Sigmoid colon (tissue), 7 donors: ENCODE measurements at regions of chr19 and their contacts with region 1.

Region 1: DNA sequence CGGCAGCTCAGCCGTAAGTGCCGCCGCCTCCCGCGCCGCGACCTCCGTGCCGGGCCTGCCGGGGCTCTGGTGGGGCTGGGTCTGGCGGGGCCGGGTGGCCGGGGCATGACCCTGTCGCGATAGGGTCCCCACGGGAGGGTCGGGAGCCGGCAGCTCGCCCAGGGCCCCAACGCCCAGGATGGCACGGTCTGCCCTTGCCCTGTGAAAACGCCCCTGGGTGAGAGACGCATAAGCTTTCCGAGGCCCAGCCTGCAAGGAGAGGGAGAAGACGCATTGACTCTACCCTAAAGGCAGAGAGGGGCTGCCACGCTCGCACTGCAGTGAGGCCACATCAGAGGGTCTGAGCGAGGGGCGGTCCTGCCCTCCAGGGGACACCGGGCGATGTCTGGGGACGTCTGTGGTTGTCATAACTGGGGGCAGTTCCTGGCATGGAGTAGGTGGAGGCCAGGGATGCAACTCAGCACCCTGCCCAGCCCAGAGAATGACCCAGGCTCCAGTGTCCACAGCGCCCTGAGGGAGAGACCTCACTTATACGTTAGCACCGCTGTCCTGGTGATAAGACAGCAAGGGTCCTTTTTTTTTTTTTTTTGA is 539 bp downstream of the ZNF554 start:
- DNase-seq: no peak
- H3K4me3 ChIP-seq: peak overlapping the region; percentile 74 to 86 (median 78)
- H3K27ac ChIP-seq: peak overlapping the region; percentile 48 to 77 (median 63)
- H3K4me1 ChIP-seq: peaks cover 0 to 18% (median 10%) of the 10 kb centered on the region in 4 donors
- H3K27me3 ChIP-seq: no peaks in the 10 kb centered on the region
- CTCF ChIP-seq: no peak
- EP300 ChIP-seq: no peak
- POLR2A ChIP-seq: no peak

Region 2: GRCh38 chr19:2867025-2867991 is 47.1 kb after region 1 on chr19 and contains the start of gene ZNF556:
- intact Hi-C with region 1: loop called (anchors 2 kb)
- DNase-seq: no peak
- H3K4me3 ChIP-seq: no peak within 1 kb of the TSS
- H3K27ac ChIP-seq: no peak within 1 kb of the TSS
- H3K4me1 ChIP-seq: no peaks in the 10 kb centered on the region
- H3K27me3 ChIP-seq: no peaks in the 10 kb centered on the region
- CTCF ChIP-seq: no peak
- EP300 ChIP-seq: no peak
- POLR2A ChIP-seq: no peak
- total RNA-seq, gene ZNF556: not detected

Region 3: GRCh38 chr19:3116255-3116602 is 296.0 kb after region 1 on chr19:
- intact Hi-C with region 1: no loop called
- DNase-seq: no peak
- H3K4me3 ChIP-seq: no peak overlapping the region
- H3K27ac ChIP-seq: peak overlapping the region in 3 of 4 donors; percentile 31 to 71 (median 37)
- H3K4me1 ChIP-seq: peaks cover 0 to 17% (median 4%) of the 10 kb centered on the region in 4 donors
- H3K27me3 ChIP-seq: no peaks in the 10 kb centered on the region
- CTCF ChIP-seq: no peak
- EP300 ChIP-seq: no peak
- POLR2A ChIP-seq: no peak